Sigmoid colon (tissue), 7 donors: ENCODE measurements at regions of chr7 and their contacts with region 1.

Region 1: GRCh38 chr7:134789967-134790685 is 10.7 kb downstream of the CALD1 start:
- DNase-seq: peak; percentile 87
- H3K4me3 ChIP-seq: peak overlapping the region in 2 of 4 donors; percentile 7 to 24
- H3K27ac ChIP-seq: peak overlapping the region; percentile 91 to 94 (median 93)
- H3K4me1 ChIP-seq: peaks cover 0 to 96% (median 82%) of the 10 kb centered on the region in 4 donors
- H3K27me3 ChIP-seq: no peaks in the 10 kb centered on the region
- CTCF ChIP-seq: no peak
- EP300 ChIP-seq: peak; percentile 82 to 97 (median 97)
- POLR2A ChIP-seq: no peak

Region 2: DNA sequence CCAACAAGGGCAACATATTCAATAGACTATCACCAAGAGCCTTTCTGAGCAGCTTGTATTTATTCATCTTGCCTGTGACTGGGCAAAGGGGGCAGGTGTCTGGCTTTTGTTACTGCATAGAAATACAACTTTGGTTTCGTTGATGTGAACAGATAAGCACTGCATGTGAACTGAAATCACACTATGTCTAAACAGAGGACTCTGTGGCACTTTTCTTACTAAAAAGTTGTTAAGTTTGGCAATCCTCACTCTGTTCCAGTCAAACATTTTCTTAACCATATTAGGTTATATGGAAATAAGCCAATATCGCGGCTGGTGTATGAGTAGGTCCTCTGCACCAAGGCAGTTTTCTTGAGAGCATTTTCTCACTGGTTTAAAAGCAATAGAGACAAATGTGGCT is 37.8 kb after region 1 on chr7:
- intact Hi-C with region 1: loop called (anchors 5 kb)
- DNase-seq: peak; percentile 76
- H3K4me3 ChIP-seq: no peak overlapping the region
- H3K27ac ChIP-seq: peak overlapping the region; percentile 80 to 94 (median 83)
- H3K4me1 ChIP-seq: peaks cover 0 to 100% (median 89%) of the 10 kb centered on the region in 4 donors
- H3K27me3 ChIP-seq: no peaks in the 10 kb centered on the region
- CTCF ChIP-seq: no peak
- EP300 ChIP-seq: peak; percentile 31 to 74 (median 62)
- POLR2A ChIP-seq: no peak

Region 3: GRCh38 chr7:135224027-135224426 is 433.9 kb after region 1 on chr7:
- intact Hi-C with region 1: no loop called
- DNase-seq: no peak
- H3K4me3 ChIP-seq: no peak overlapping the region
- H3K27ac ChIP-seq: no peak overlapping the region
- H3K4me1 ChIP-seq: no peaks in the 10 kb centered on the region
- H3K27me3 ChIP-seq: no peaks in the 10 kb centered on the region
- CTCF ChIP-seq: no peak
- EP300 ChIP-seq: no peak
- POLR2A ChIP-seq: no peak